Vagina (tissue), 2 donors: ENCODE measurements at regions of chr15 and their contacts with region 1.

Region 1: DNA sequence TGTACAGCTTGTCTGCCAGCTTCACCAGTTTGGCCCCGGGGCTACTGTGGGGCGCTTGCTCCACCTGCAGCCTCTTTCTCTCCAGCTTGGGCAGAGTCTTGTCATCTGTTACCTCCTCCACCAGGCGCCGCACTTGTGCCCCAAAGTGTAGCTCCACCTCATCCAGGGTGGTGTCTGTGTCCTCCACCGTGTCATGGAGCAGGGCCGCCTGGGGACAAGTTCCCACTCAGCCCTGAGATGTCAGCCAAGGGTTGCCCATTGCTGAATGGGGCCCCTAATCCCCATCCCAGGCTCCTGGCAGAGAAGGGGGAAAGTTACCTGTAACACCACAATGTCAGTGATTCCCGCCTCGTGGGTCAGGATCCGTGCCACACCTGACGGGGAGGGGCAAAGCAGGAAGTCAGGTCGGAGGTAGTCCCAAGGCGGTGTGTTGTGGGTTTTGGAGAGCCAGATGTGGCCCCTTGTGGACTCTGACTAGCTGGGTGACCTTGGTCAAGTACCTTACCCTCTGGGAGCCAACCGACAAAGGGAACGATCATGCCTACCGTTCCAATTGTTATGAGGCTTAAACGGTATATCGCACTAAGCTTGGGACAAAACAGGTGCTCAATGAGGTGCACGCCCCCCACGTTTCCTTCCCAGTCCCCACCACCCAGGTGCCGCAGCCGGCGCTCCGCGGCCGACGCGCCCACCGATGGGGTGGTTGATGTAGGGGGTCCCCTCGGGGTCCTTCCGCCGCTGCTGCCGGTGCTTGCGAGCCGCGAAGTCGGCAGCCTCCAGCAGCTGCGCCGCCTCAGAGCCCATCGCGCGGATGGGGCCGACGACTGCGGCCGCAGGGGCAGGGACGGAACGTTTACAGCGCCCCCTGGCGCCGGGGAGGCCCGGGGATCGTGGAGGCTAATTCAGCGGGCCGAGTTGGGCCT is at the start of gene HDDC3:
- DNase-seq: no peak
- H3K4me3 ChIP-seq: peak within 1 kb of the TSS; percentile 72 to 75
- H3K27ac ChIP-seq: peak within 1 kb of the TSS; percentile 93
- H3K4me1 ChIP-seq: peaks cover 52% of the 10 kb centered on the region
- H3K27me3 ChIP-seq: no peaks in the 10 kb centered on the region
- CTCF ChIP-seq: peak; percentile 66 to 84 (median 72)
- POLR2A ChIP-seq: peak in 1 of 2 donors; percentile 34
- total RNA-seq, gene HDDC3: 7.9 TPM

Region 2: DNA sequence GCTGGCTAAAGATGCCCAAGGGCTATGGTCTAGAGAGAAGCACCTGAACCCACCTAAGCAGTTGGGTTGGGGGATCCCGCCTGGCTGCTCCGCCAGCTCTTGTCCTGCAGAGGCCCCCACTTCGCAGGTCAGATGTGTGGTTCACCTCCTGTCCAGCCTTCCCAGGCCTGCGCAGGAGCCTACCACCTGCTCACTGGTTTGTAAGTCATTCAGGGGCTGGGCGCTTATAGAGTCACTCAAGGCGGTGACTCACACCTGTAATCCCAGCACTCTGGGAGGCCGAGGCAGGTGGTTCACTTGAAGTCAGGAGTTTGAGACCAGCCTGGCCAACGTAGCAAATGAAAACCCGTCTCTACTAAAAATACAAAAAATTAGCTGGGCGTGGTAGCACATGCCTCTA is 67.5 kb before region 1 on chr15:
- intact Hi-C with region 1: loop called (anchors 2 kb)
- DNase-seq: no peak
- H3K4me3 ChIP-seq: no peak overlapping the region
- H3K27ac ChIP-seq: no peak overlapping the region
- H3K4me1 ChIP-seq: peaks cover 17% of the 10 kb centered on the region
- H3K27me3 ChIP-seq: no peaks in the 10 kb centered on the region
- CTCF ChIP-seq: no peak
- POLR2A ChIP-seq: no peak

Region 3: GRCh38 chr15:91135201-91136130 is 203.5 kb after region 1 on chr15:
- intact Hi-C with region 1: no loop called
- DNase-seq: no peak
- H3K4me3 ChIP-seq: no peak overlapping the region
- H3K27ac ChIP-seq: no peak overlapping the region
- H3K4me1 ChIP-seq: no peaks in the 10 kb centered on the region
- H3K27me3 ChIP-seq: no peaks in the 10 kb centered on the region
- CTCF ChIP-seq: no peak
- POLR2A ChIP-seq: no peak